ENCODE measurements at regions of chr3 and their contacts with region 1.

Region 1: GRCh38 chr3:168511428-168512014 is 415.8 kb upstream of the GOLIM4 start:
- DNase-seq: no peak
- ATAC-seq: no peak

Region 2: GRCh38 chr3:168624892-168625448 is 113.4 kb after region 1 on chr3:
- intact Hi-C with region 1: no loop called
- DNase-seq: no peak
- ATAC-seq: no peak

Region 3: DNA sequence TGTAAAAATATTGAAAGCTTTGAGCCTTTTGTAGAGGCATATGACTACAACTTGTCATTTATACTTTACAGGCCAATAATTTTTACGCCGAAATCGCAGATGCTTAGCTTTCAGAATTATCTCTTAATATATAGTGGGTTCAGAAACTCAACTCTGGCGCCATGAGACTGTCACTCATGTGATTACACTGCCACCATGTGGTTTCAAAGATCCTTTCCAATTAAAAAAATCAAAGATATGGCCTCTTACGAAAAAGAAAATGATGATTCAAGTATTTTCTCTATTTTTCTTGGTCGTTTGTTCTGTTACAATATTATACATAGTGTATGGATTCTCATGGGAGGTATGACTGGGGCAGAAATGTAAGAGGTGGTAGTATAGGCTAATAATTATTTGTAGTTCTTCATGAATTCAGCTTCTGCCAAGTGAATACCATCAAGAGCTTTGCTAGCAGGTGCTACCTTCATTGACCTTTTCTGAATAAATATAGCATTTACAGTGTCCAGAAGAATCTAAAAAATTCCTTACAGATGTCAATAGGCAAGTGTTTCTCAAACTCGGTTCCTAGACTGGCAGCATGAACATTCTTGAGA is 335.9 kb after region 1 on chr3:
- intact Hi-C with region 1: loop called in 1 of 2 experiments (anchors 10 kb)
- DNase-seq: no peak
- ATAC-seq: peak; percentile 59